Activated CD4-positive, alpha-beta T cell treated with anti-CD3 and anti-CD28 coated beads, Interleukin-2, amount 10 ng/mL, durations not matched to agents 24 days and 14 days (primary cell): ENCODE measurements at regions of chr16 and their contacts with region 1.

Region 1: DNA sequence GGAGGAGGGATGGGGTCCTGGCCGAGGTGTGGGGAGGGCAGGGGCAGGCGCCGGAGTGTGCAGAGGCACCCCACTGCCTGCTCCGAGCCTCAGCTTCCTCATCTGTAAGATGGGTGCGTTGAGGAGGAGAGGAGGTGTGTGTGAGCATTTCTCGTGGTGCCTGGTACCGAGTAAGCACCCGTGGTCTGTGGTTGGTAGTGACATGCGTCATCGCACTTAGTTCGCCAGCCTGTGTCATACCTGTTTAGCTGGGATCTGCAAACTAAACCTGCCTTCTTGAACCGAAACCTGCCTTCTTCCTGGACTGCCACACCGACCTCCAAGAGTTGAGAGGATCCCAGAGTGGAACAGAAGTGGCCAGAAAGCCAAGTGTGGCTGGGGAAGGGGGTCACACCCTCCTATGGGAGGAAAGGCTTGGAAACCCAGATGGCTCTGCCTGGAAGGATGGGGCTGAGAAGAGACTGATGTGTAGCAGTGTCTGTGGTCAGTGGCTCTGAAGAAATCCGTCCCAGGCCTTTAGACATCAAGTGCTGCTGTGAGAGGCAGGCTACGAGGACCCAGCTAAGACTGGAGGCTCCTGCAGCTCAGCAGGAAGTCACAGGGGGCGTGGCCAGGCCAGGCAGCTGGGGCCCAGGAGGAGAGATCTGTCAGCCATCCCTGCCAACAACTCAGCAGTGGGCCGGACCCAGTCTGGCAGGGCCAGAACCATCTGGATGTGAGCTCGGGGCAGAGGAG is 162.6 kb upstream of the PLCG2 start:
- DNase-seq: peak; percentile 92
- H3K4me3 Mint-ChIP-seq: peak overlapping the region; percentile 67
- H3K27ac Mint-ChIP-seq: peak overlapping the region; percentile 91
- H3K4me1 Mint-ChIP-seq: peaks cover 15% of the 10 kb centered on the region
- H3K27me3 Mint-ChIP-seq: no peaks in the 10 kb centered on the region

Region 2: GRCh38 chr16:81444448-81445121 is 171.9 kb before region 1 on chr16 and contains the start of gene CMIP:
- intact Hi-C with region 1: loop called (anchors 5 kb)
- DNase-seq: peak; percentile 95
- H3K4me3 Mint-ChIP-seq: peak within 1 kb of the TSS; percentile 87
- H3K27ac Mint-ChIP-seq: peak within 1 kb of the TSS; percentile 90
- H3K4me1 Mint-ChIP-seq: peaks cover 40% of the 10 kb centered on the region
- H3K27me3 Mint-ChIP-seq: peaks cover 33% of the 10 kb centered on the region
- total RNA-seq, gene CMIP: 40.0 and 42.9 TPM in 2 replicates

Region 3: DNA sequence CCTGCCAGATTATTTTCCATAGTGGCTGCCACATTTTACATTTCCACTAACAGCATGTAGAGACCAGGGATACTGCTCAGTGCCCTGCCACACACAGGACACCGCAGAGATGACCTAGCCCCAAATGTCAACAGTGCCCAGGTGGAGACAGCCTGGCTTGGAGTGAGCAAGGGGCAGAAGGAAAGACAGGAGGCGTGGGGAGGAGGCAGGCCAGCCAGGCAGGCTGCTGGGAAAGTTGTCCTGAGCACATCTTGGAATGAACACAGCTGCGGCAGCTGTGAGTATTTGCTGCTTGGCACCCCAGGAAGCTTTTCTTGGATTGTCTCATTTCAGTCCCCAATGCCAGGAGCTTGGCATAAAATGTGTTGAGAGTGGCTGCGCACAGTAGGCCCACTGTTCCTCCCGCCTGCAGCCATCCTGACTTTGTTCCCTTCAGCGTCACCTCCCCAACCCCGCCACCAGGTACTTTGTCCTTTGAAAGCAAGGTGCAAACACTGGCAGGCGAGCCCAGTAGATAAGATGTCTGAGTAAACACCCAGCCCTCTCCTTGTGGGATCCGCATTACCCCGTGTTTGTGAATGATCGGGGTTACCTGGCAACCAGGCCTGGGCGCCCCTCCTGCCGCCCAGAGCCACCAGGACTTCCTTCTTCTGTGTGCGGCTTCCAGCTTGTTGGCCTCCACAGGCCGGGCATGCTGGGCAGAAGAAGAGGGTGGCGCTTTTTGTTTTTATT is 57.9 kb before region 1 on chr16:
- intact Hi-C with region 1: no loop called
- DNase-seq: no peak
- H3K4me3 Mint-ChIP-seq: no peak overlapping the region
- H3K27ac Mint-ChIP-seq: no peak overlapping the region
- H3K4me1 Mint-ChIP-seq: peaks cover 11% of the 10 kb centered on the region
- H3K27me3 Mint-ChIP-seq: no peaks in the 10 kb centered on the region

Region 4: DNA sequence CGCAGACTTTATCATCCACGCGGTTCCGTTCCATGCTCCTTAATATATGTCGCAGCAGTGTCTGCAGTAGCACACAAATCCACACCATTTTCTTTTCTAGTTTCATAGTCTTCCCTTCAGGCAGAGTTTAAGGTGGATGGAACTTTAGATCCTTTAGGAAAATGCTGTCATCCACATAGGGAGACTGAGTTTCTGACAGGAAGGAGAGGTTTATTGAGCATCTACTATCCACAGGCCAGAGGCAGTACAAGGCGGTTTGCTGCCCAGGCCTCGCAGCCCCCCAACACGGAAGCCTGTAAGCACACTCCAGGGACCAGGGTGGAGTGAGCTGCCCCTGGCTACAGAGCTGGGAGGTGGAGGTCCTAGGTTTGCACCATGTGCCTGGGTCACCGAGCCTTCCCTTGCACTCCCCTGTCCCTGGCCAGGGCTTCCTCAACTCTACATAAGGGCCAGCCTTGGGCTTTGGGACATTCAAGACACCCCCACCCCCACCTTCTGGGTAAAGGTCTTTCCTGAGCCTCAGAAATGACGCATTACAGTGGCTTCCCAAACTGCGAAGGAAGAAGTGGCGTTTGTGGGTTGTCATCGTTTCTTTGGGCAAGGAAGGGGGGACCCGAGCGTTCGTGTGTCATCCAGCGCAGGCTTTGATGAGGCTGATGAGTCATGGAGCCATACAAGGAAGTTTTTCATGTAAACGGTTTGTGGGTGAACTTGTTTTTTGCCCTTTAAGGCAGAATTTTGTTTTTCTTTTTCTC is 16.1 kb after region 1 on chr16:
- intact Hi-C with region 1: loop called (anchors 1 kb)
- DNase-seq: peak; percentile 93
- H3K4me3 Mint-ChIP-seq: peak overlapping the region; percentile 82
- H3K27ac Mint-ChIP-seq: peak overlapping the region; percentile 100
- H3K4me1 Mint-ChIP-seq: peaks cover 65% of the 10 kb centered on the region
- H3K27me3 Mint-ChIP-seq: no peaks in the 10 kb centered on the region

Region 5: GRCh38 chr16:82181456-82182185 is 565.1 kb after region 1 on chr16:
- intact Hi-C with region 1: no loop called
- DNase-seq: no peak
- H3K4me3 Mint-ChIP-seq: no peak overlapping the region
- H3K27ac Mint-ChIP-seq: no peak overlapping the region
- H3K4me1 Mint-ChIP-seq: no peaks in the 10 kb centered on the region
- H3K27me3 Mint-ChIP-seq: peaks cover 33% of the 10 kb centered on the region